GM12878 (cell line): ENCODE measurements at regions of chr20 and their contacts with region 1.

Region 1: GRCh38 chr20:25987073-25987927 is 290.6 kb upstream of the ZNF337 start:
- DNase-seq: no peak
- ATAC-seq: peak; percentile 92
- H3K4me3 ChIP-seq: peak overlapping the region; percentile 55; the same call in 1 of the 2 replicates
- H3K27ac ChIP-seq: no peak overlapping the region
- H3K4me1 ChIP-seq: no peaks in the 10 kb centered on the region; the same call in 1 of the 2 replicates
- H3K27me3 ChIP-seq: no peaks in the 10 kb centered on the region
- CTCF ChIP-seq: peak; percentile 26 to 40 (median 29); a peak in 3 of 6 replicates
- EP300 ChIP-seq: no peak
- POLR2A ChIP-seq: no peak
- RAD21 ChIP-seq: no peak

Region 2: GRCh38 chr20:26163890-26164289 is 176.6 kb after region 1 on chr20:
- CTCF ChIA-PET with region 1: no interaction called
- POLR2A ChIA-PET with region 1: no interaction called
- RAD21 ChIA-PET with region 1: no interaction called
- SMC1A ChIA-PET with region 1: no interaction called
- in situ Hi-C with region 1: loop called (anchors 25 kb)
- intact Hi-C with region 1: no loop called
- DNase-seq: no peak
- ATAC-seq: no peak
- H3K4me3 ChIP-seq: no peak overlapping the region
- H3K27ac ChIP-seq: no peak overlapping the region
- H3K4me1 ChIP-seq: no peaks in the 10 kb centered on the region
- H3K27me3 ChIP-seq: no peaks in the 10 kb centered on the region
- CTCF ChIP-seq: no peak
- EP300 ChIP-seq: no peak
- POLR2A ChIP-seq: no peak
- RAD21 ChIP-seq: no peak